T-cell (primary cell): ENCODE measurements at regions of chr10 and their contacts with region 1.

Region 1: DNA sequence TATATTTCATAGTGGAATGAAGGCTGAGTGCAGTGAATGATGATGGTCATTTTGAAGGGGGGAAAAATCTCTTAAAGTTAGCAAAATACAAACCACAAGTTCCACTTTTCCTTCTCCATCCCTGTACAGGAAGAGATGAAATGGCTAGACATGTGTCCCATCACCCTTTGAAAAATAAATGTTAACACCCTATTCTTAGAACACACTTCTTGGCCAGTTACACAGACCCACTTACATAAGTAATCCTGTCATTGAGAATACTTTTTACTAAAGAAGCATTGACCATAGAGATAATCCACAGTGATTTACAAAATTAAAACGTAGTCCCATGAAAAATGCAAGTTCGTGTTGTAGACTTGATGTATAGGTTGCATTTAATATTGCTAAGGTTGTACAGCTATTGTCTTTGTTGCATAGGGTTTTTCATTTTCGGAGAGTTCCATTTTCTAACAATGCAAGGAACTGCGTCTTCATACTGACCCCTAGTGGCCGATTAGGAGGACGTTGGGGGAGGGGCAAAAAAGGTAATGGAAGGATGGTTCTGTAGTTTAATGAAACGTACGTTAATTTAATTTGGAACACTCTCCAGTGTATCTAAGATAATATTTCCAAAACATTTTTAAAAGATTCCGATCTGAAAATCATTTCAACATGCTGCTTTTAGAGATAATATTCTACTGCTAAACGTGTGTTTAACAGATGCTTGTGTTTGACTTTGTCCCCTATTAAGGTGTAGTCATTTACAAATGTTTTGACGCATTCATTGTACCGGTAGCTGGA is 60.9 kb downstream of the ARMC3 start:
- DNase-seq: peak; percentile 19 to 87 (median 57)
- ATAC-seq: peak; percentile 72 to 84 (median 76)
- H3K4me3 ChIP-seq: no peak overlapping the region
- H3K4me3 Mint-ChIP-seq: no peak overlapping the region
- H3K27ac ChIP-seq: no peak overlapping the region
- H3K27ac Mint-ChIP-seq: no peak overlapping the region
- H3K4me1 ChIP-seq: peaks cover 0 to 5% of the 10 kb centered on the region in 2 experiments
- H3K4me1 Mint-ChIP-seq: peaks cover 7 to 20% (median 13%) of the 10 kb centered on the region in 3 donors
- H3K27me3 ChIP-seq: no peaks in the 10 kb centered on the region
- H3K27me3 Mint-ChIP-seq: peaks cover 0 to 2% of the 10 kb centered on the region in 2 donors

Region 2: DNA sequence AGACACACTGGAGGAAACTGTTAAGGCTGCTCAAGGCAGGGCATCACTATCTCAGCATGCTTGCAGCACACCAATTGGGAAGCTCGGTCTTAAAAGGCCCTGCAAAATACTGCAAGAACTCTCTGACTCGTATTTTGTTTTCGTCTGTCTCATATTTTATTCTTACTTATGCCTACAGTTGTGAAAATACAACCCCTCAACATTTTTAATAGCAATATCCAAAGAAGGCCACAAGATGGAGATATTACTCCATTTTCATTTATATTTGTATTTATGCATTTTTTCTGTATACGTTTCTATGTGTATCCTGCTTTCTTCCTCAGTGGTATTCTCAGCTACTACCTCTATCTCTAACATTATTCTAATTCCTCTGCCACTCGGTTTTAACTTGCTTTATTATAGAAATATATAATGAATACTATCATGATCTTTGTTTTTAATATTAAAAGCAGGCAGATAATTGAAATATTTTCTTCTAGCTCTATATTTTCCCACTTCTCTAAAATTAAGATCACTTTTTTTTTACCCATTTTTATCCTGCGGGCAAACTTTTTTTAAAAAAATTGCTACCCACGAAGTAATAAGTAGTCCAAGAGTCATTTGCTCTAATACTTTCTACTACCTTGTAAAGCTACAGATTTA is 995.3 kb before region 1 on chr10:
- CTCF ChIA-PET with region 1: interaction called, 18 to 36 read pairs
- POLR2A ChIA-PET with region 1: no interaction called
- DNase-seq: peak in 2 of 35 experiments; percentile 14 to 71
- ATAC-seq: peak in 1 of 4 experiments; percentile 57
- H3K4me3 ChIP-seq: no peak overlapping the region
- H3K4me3 Mint-ChIP-seq: no peak overlapping the region
- H3K27ac ChIP-seq: no peak overlapping the region
- H3K27ac Mint-ChIP-seq: no peak overlapping the region
- H3K4me1 ChIP-seq: peaks cover 3 to 4% of the 10 kb centered on the region in 2 experiments
- H3K4me1 Mint-ChIP-seq: peaks cover 13 to 26% (median 24%) of the 10 kb centered on the region in 3 donors
- H3K27me3 ChIP-seq: no peaks in the 10 kb centered on the region
- H3K27me3 Mint-ChIP-seq: no peaks in the 10 kb centered on the region

Region 3: DNA sequence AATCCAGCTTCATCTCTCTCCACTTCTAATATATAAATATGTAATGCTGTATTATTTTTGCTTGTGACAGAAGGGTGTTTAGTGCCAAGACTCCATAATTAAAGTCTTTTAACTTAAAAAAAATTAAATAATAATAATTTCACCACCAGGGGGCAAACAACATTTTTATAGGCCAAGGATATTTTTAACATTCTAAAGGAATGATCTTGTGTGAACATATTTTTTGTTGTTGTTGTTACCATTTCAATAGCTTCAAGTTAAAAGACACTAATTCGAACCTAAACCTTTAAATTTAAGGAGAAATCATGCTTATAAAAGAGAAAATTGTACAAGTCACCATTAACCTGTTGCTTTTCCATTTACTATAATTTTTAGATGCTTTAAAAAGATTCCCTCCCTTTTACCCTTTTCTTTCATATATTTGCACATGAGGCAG is 977.8 kb before region 1 on chr10:
- CTCF ChIA-PET with region 1: interaction called, 7 to 15 read pairs
- POLR2A ChIA-PET with region 1: no interaction called
- DNase-seq: peak in 1 of 35 experiments; percentile 52
- ATAC-seq: no peak
- H3K4me3 ChIP-seq: no peak overlapping the region
- H3K4me3 Mint-ChIP-seq: no peak overlapping the region
- H3K27ac ChIP-seq: no peak overlapping the region
- H3K27ac Mint-ChIP-seq: no peak overlapping the region
- H3K4me1 ChIP-seq: no peaks in the 10 kb centered on the region
- H3K4me1 Mint-ChIP-seq: peaks cover under 1 to 4% (median 3%) of the 10 kb centered on the region in 3 donors
- H3K27me3 ChIP-seq: peaks cover 0 to 3% of the 10 kb centered on the region in 2 experiments
- H3K27me3 Mint-ChIP-seq: peaks cover 0 to 5% of the 10 kb centered on the region in 2 donors

Region 4: GRCh38 chr10:22550732-22551131 is 438.0 kb before region 1 on chr10:
- CTCF ChIA-PET with region 1: interaction called, 6 to 31 read pairs
- POLR2A ChIA-PET with region 1: interaction called in 1 of 2 experiments, 5 read pairs
- DNase-seq: peak; percentile 27 to 81 (median 69)
- ATAC-seq: peak in 3 of 4 experiments; percentile 48 to 70 (median 52)
- H3K4me3 ChIP-seq: no peak overlapping the region
- H3K4me3 Mint-ChIP-seq: no peak overlapping the region
- H3K27ac ChIP-seq: no peak overlapping the region
- H3K27ac Mint-ChIP-seq: peak overlapping the region; percentile 52 to 74
- H3K4me1 ChIP-seq: peaks cover 0 to 3% of the 10 kb centered on the region in 2 experiments
- H3K4me1 Mint-ChIP-seq: peaks cover 14 to 24% (median 21%) of the 10 kb centered on the region in 3 donors
- H3K27me3 ChIP-seq: no peaks in the 10 kb centered on the region
- H3K27me3 Mint-ChIP-seq: no peaks in the 10 kb centered on the region

Region 5: GRCh38 chr10:22609728-22610465 is 378.9 kb before region 1 on chr10:
- CTCF ChIA-PET with region 1: interaction called, 5 to 15 read pairs
- POLR2A ChIA-PET with region 1: no interaction called
- DNase-seq: no peak
- ATAC-seq: no peak
- H3K4me3 ChIP-seq: no peak overlapping the region
- H3K4me3 Mint-ChIP-seq: peak overlapping the region; percentile 42 to 82 (median 72)
- H3K27ac ChIP-seq: peak overlapping the region; percentile 93
- H3K27ac Mint-ChIP-seq: peak overlapping the region; percentile 96 to 99
- H3K4me1 ChIP-seq: peaks cover 65 to 76% of the 10 kb centered on the region in 2 experiments
- H3K4me1 Mint-ChIP-seq: peaks cover 89 to 97% (median 95%) of the 10 kb centered on the region in 3 donors
- H3K27me3 ChIP-seq: no peaks in the 10 kb centered on the region
- H3K27me3 Mint-ChIP-seq: no peaks in the 10 kb centered on the region

Region 6: DNA sequence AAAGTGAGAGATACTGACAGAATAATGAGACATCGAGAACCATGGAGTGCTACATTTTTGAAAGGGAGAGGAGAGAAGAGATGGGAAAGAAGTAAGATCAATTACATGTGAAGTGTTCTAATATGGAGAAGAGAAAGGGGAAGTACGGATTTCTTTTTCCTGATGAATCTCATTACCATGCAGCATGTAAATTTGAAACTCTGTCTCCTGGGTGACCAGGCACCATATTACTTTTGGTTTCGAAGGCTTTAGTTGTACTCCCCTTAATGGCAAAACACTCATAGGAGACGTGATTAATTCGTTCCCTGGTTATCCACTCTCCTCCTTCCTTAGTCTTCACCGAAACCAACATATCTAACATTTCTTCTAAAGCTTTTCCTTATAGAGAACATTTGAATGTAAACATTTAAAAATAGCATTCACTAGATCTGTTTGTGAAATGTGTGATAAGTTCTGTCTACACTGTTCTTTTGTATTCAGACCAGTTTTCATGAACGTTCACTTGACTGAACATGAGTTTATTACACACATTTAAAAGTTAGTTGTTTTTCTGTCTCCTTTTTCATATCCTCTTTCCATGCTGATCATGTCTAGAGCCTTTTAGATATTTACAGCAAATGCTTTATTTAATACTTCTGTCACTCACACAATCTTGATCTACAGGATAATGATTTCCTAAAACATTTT is 26.4 kb after region 1 on chr10:
- CTCF ChIA-PET with region 1: no interaction called
- POLR2A ChIA-PET with region 1: no interaction called
- DNase-seq: no peak
- ATAC-seq: no peak
- H3K4me3 ChIP-seq: no peak overlapping the region
- H3K4me3 Mint-ChIP-seq: no peak overlapping the region
- H3K27ac ChIP-seq: no peak overlapping the region
- H3K27ac Mint-ChIP-seq: no peak overlapping the region
- H3K4me1 ChIP-seq: no peaks in the 10 kb centered on the region
- H3K4me1 Mint-ChIP-seq: no peaks in the 10 kb centered on the region
- H3K27me3 ChIP-seq: peaks cover 0 to 3% of the 10 kb centered on the region in 2 experiments
- H3K27me3 Mint-ChIP-seq: peaks cover 14 to 20% of the 10 kb centered on the region in 2 donors

Region 7: DNA sequence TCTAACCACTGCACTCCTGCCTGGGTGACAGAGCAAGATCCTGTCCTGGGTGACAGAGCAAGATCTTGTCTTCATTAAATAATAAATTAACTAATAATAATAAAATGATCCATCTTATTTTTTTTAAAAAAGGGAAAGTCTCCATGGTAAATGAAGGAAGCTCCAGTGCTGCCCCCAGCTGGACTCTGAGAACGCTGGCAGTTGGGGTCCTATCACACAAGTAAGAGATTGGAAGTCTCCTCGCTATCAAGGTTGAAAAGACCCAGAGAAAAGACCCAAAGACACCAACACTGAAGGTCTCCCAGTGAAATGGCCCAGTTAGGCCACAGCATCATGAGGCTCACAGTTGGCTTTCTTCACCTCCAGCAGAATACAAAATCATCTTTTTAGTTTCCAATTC is 369.6 kb after region 1 on chr10:
- CTCF ChIA-PET with region 1: no interaction called
- POLR2A ChIA-PET with region 1: no interaction called
- DNase-seq: no peak
- ATAC-seq: no peak
- H3K4me3 ChIP-seq: no peak overlapping the region
- H3K4me3 Mint-ChIP-seq: no peak overlapping the region
- H3K27ac ChIP-seq: no peak overlapping the region
- H3K27ac Mint-ChIP-seq: no peak overlapping the region
- H3K4me1 ChIP-seq: peaks cover 10 to 12% of the 10 kb centered on the region in 2 experiments
- H3K4me1 Mint-ChIP-seq: peaks cover 13 to 20% (median 14%) of the 10 kb centered on the region in 3 donors
- H3K27me3 ChIP-seq: no peaks in the 10 kb centered on the region
- H3K27me3 Mint-ChIP-seq: no peaks in the 10 kb centered on the region